PC-3 (cell line): ENCODE measurements at regions of chr7 and their contacts with region 1.

Region 1: DNA sequence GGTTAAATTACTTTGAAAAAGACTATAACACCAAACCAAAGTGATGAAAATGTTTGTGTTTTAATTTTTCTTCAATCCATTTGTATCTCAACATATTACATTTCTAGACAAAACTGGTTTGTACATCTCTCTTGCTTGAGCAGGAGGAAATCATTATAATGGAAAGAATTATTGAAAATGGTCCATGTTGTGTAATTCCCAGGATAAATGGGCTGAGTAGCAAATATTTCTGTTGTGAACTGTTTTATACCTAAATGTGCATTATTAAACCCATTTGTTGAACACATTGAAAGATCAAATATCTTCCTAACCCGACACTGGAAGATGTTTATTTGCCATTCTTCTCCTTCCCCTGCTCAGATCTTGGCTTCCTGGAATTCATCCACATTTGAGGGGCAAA is 14.1 kb upstream of the CDK6 start:
- DNase-seq: no peak
- ATAC-seq: no peak
- H3K4me3 ChIP-seq: no peak overlapping the region
- H3K27ac ChIP-seq: no peak overlapping the region
- H3K4me1 ChIP-seq: no peaks in the 10 kb centered on the region
- H3K27me3 ChIP-seq: peaks cover 8% of the 10 kb centered on the region; the same call in 1 of the 2 replicates
- CTCF ChIP-seq: no peak

Region 2: GRCh38 chr7:92933810-92934449 is 83.4 kb after region 1 on chr7:
- CTCF ChIA-PET with region 1: no interaction called
- POLR2A ChIA-PET with region 1: interaction called, 17 read pairs
- intact Hi-C with region 1: no loop called
- DNase-seq: peak; percentile 95
- ATAC-seq: peak; percentile 97
- H3K4me3 ChIP-seq: no peak overlapping the region
- H3K27ac ChIP-seq: peak overlapping the region; percentile 55
- H3K4me1 ChIP-seq: peaks cover 16% of the 10 kb centered on the region
- H3K27me3 ChIP-seq: no peaks in the 10 kb centered on the region
- CTCF ChIP-seq: no peak